ENCODE measurements at regions of chr21 and their contacts with region 1.

Region 1: DNA sequence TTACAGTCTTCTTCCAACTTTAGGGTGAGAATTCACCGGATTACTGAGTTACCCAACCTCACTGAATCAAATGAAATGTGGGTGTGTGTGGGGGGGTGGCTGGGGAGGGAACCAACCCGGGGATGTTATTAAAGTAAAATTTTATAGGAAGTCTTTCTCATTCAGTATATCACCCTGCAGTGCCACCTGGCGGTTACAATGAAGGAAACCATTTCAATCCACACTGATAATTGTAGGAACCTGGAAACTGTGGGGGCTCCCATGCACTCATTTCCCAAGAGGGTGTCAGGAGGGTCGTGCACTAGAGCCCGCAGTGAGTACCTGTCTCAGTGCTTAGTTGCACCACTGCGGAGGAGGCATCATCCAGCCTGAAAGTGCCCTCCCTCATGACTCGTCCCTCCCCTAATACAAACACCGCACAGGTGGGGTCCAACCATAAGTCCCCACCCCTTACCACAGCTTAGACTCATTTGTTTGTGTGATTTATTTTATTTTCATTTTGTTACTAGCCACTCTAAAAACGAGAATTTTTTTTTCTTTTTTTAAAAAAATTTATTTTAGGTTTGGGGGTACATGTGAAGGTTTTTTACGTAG is 29.1 kb upstream of the IGSF5 start:
- DNase-seq: peak in 1 of 2 donors; percentile 41
- ATAC-seq: peak in 3 of 4 donors; percentile 43 to 69 (median 61)
- H3K4me3 ChIP-seq: no peak overlapping the region
- H3K27ac ChIP-seq: no peak overlapping the region
- H3K4me1 ChIP-seq: no peaks in the 10 kb centered on the region
- H3K27me3 ChIP-seq: peaks cover 0 to 3% (median 0%) of the 10 kb centered on the region in 3 donors
- CTCF ChIP-seq: peak; percentile 67

Region 2: GRCh38 chr21:39518138-39518846 is 197.6 kb before region 1 on chr21:
- intact Hi-C with region 1: loop called (anchors 1 kb)
- DNase-seq: peak in 1 of 2 donors; percentile 39
- ATAC-seq: peak; percentile 67 to 86 (median 80)
- H3K4me3 ChIP-seq: no peak overlapping the region
- H3K27ac ChIP-seq: no peak overlapping the region
- H3K4me1 ChIP-seq: peaks cover 20% of the 10 kb centered on the region
- H3K27me3 ChIP-seq: no peaks in the 10 kb centered on the region
- CTCF ChIP-seq: peak; percentile 90